ENCODE measurements at regions of chr2 and their contacts with region 1.

Region 1: GRCh38 chr2:37215250-37215649 is 16.1 kb downstream of the CEBPZ start:
- DNase-seq: no peak
- H3K4me3 ChIP-seq: no peak overlapping the region
- H3K27ac ChIP-seq: no peak overlapping the region
- H3K4me1 ChIP-seq: no peaks in the 10 kb centered on the region
- H3K27me3 ChIP-seq: no peaks in the 10 kb centered on the region
- CTCF ChIP-seq: no peak
- EP300 ChIP-seq: no peak
- POLR2A ChIP-seq: no peak
- RAD21 ChIP-seq: no peak

Region 2: GRCh38 chr2:37180006-37180639 is 35.1 kb before region 1 on chr2:
- CTCF ChIA-PET with region 1: interaction called, 13 read pairs
- POLR2A ChIA-PET with region 1: interaction called, 5 read pairs
- DNase-seq: no peak
- H3K4me3 ChIP-seq: no peak overlapping the region
- H3K27ac ChIP-seq: no peak overlapping the region
- H3K4me1 ChIP-seq: peaks cover 0 to 9% (median 3%) of the 10 kb centered on the region in 4 experiments; a peak in 3 of 7 replicates
- H3K27me3 ChIP-seq: no peaks in the 10 kb centered on the region
- CTCF ChIP-seq: peak in 1 of 3 experiments; percentile 35; a peak in 2 of 4 replicates
- EP300 ChIP-seq: no peak
- POLR2A ChIP-seq: no peak
- RAD21 ChIP-seq: peak; percentile 53 to 65

Region 3: GRCh38 chr2:37201766-37202165 is 13.5 kb before region 1 on chr2:
- CTCF ChIA-PET with region 1: interaction called, 8 read pairs
- POLR2A ChIA-PET with region 1: interaction called, 10 read pairs
- DNase-seq: no peak
- H3K4me3 ChIP-seq: no peak overlapping the region
- H3K27ac ChIP-seq: peak overlapping the region; percentile 52; the same call in 1 of the 2 replicates
- H3K4me1 ChIP-seq: peaks cover 0 to 17% (median 5%) of the 10 kb centered on the region in 4 experiments; a peak in 4 of 7 replicates
- H3K27me3 ChIP-seq: no peaks in the 10 kb centered on the region
- CTCF ChIP-seq: no peak
- EP300 ChIP-seq: no peak
- POLR2A ChIP-seq: no peak
- RAD21 ChIP-seq: no peak; a peak in 1 of 4 replicates